ENCODE measurements at regions of chr14 and their contacts with region 1.

Region 1: DNA sequence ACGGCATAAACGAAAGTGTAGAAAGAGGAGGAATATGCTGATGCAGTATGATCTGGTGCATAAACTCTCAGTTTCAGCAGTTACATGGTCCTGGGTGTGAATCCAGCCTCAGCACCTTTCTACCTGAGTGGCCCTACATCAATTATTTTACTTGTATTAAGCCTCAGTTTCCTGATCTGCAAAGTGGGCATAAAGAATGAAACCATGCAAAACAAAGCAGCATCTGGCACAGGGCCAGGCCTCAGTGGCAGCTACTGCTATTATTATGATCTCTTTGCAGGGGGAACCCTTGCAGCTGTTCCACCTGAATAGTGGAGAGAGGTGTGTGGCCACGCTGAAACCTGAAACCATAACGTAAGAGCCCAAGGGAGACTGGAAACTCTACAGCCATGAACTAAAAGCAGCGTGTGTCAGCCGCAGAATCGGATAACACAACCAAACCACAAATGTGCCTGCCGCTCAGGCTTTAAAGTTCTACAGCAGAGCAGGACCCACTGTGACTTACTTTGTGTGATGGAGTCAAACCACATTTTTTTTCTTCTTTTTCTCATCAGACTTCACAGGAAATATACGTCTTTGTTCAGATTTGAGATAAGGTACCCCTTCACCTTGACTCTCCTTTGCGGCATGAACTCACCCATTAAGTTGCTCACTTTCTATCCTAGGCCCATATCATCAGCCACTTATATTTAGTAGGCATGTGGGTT is 29.2 kb upstream of the FOS start:
- DNase-seq: peak; percentile 97
- H3K4me3 ChIP-seq: peak overlapping the region; percentile 49
- H3K27ac ChIP-seq: peak overlapping the region; percentile 88
- H3K4me1 ChIP-seq: peaks cover 56% of the 10 kb centered on the region
- CTCF ChIP-seq: no peak

Region 2: GRCh38 chr14:75188520-75189268 is 60.7 kb before region 1 on chr14:
- CTCF ChIA-PET with region 1: no interaction called
- POLR2A ChIA-PET with region 1: interaction called, 3 read pairs
- intact Hi-C with region 1: loop called (anchors 1 kb)
- DNase-seq: peak; percentile 92
- H3K4me3 ChIP-seq: peak overlapping the region; percentile 33
- H3K27ac ChIP-seq: peak overlapping the region; percentile 65
- H3K4me1 ChIP-seq: peaks cover 34% of the 10 kb centered on the region
- CTCF ChIP-seq: peak; percentile 53

Region 3: DNA sequence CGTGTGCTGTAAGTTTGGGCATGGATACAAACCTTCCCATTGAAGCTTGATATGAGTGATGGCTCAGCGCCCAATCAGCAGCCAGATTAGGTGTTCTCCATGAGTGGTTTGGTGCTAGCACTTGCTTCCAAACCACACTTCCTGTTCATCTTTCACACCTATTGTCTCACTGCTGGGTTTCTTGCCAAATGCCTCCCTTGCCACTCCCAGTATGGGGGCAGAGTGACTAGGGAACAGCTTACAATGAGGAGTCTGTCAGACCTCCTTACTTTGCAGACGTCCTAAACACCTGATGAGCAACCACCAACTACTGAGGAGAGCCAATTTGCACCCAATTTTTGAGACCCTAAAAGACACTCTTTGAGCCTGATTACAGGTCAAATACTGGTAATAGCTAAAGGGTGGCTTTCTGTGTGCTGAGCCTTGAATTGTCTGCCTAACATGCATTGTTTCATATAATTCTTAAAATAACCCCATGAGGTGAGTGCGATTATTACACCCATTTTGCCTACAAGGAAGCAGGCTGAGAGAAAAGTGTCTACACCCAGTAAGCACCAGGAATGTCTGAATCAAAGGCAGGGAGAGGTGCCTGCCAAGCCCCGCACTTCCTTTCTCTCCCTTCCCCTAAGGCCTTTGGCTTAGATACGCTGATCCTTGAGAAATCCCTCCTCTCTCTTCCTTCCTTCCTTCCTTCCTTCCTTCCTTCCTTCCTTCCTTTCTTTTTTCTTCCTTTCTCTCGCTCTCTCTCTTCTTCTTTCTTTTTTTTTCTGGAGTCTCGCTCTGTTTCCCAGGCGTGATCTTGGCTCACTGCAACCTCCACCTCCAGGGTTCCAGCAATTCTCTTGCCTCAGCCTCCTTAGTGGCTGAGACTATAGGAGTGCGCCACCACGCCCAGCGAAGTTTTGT is 19.0 kb before region 1 on chr14:
- CTCF ChIA-PET with region 1: no interaction called
- POLR2A ChIA-PET with region 1: interaction called, 7 read pairs
- intact Hi-C with region 1: loop called (anchors 2 kb)
- DNase-seq: peak; percentile 72
- H3K4me3 ChIP-seq: peak overlapping the region; percentile 5
- H3K27ac ChIP-seq: peak overlapping the region; percentile 58
- H3K4me1 ChIP-seq: peaks cover 51% of the 10 kb centered on the region
- CTCF ChIP-seq: peak; percentile 66; the same call in 1 of the 2 replicates

Region 4: GRCh38 chr14:75278422-75279161 is 29.2 kb after region 1 on chr14 and contains the start of gene FOS:
- CTCF ChIA-PET with region 1: no interaction called
- POLR2A ChIA-PET with region 1: no interaction called
- intact Hi-C with region 1: loop called (anchors 1 kb)
- DNase-seq: peak; percentile 92
- H3K4me3 ChIP-seq: peak within 1 kb of the TSS; percentile 68
- H3K27ac ChIP-seq: peak within 1 kb of the TSS; percentile 17
- H3K4me1 ChIP-seq: peaks cover 32% of the 10 kb centered on the region
- CTCF ChIP-seq: no peak
- total RNA-seq, gene FOS: 12.4 and 16.9 TPM in 2 replicates

Region 5: GRCh38 chr14:75469606-75470237 is 220.3 kb after region 1 on chr14:
- CTCF ChIA-PET with region 1: no interaction called
- POLR2A ChIA-PET with region 1: no interaction called
- intact Hi-C with region 1: loop called (anchors 2 kb)
- DNase-seq: no peak
- H3K4me3 ChIP-seq: peak overlapping the region; percentile 50
- H3K27ac ChIP-seq: peak overlapping the region; percentile 98
- H3K4me1 ChIP-seq: peaks cover 95% of the 10 kb centered on the region
- CTCF ChIP-seq: no peak

Measured in OCI-LY7 (cell line).